CD8-positive, alpha-beta T cell (primary cell): ENCODE measurements at regions of chr12 and their contacts with region 1.

Region 1: GRCh38 chr12:9813821-9814809 is 13.2 kb upstream of the KLRF1 start:
- DNase-seq: peak; percentile 85 to 98 (median 92)
- ATAC-seq: peak; percentile 98
- H3K4me3 ChIP-seq: peak overlapping the region; percentile 65 to 66
- H3K4me3 Mint-ChIP-seq: peak overlapping the region; percentile 87
- H3K27ac ChIP-seq: peak overlapping the region; percentile 38 to 59
- H3K27ac Mint-ChIP-seq: peak overlapping the region; percentile 88
- H3K4me1 ChIP-seq: peaks cover 7% of the 10 kb centered on the region
- H3K4me1 Mint-ChIP-seq: peaks cover 13% of the 10 kb centered on the region
- H3K27me3 ChIP-seq: no peaks in the 10 kb centered on the region
- H3K27me3 Mint-ChIP-seq: peaks cover 4% of the 10 kb centered on the region
- CTCF ChIP-seq: peak; percentile 82

Region 2: GRCh38 chr12:9741726-9742125 is 72.4 kb before region 1 on chr12:
- CTCF ChIA-PET with region 1: interaction called, 138 read pairs
- POLR2A ChIA-PET with region 1: no interaction called
- intact Hi-C with region 1: no loop called
- DNase-seq: peak; percentile 44 to 95 (median 67)
- ATAC-seq: peak; percentile 59
- H3K4me3 ChIP-seq: peak overlapping the region; percentile 13 to 19
- H3K4me3 Mint-ChIP-seq: peak overlapping the region; percentile 77
- H3K27ac ChIP-seq: peak overlapping the region; percentile 63 to 68
- H3K27ac Mint-ChIP-seq: peak overlapping the region; percentile 97
- H3K4me1 ChIP-seq: peaks cover 60% of the 10 kb centered on the region
- H3K4me1 Mint-ChIP-seq: peaks cover 67% of the 10 kb centered on the region
- H3K27me3 ChIP-seq: no peaks in the 10 kb centered on the region
- H3K27me3 Mint-ChIP-seq: no peaks in the 10 kb centered on the region
- CTCF ChIP-seq: no peak

Region 3: GRCh38 chr12:9827209-9827888 is 13.2 kb after region 1 on chr12 and contains the start of gene KLRF1:
- CTCF ChIA-PET with region 1: interaction called, 19 read pairs
- POLR2A ChIA-PET with region 1: interaction called, 4 read pairs
- intact Hi-C with region 1: no loop called
- DNase-seq: peak in 2 of 9 experiments; percentile 26 to 53
- ATAC-seq: no peak
- H3K4me3 ChIP-seq: peak within 1 kb of the TSS in 1 of 2 experiments; percentile 47
- H3K4me3 Mint-ChIP-seq: peak within 1 kb of the TSS; percentile 50
- H3K27ac ChIP-seq: peak within 1 kb of the TSS in 1 of 2 experiments; percentile 60
- H3K27ac Mint-ChIP-seq: peak within 1 kb of the TSS; percentile 11
- H3K4me1 ChIP-seq: no peaks in the 10 kb centered on the region
- H3K4me1 Mint-ChIP-seq: peaks cover 11% of the 10 kb centered on the region
- H3K27me3 ChIP-seq: no peaks in the 10 kb centered on the region
- H3K27me3 Mint-ChIP-seq: no peaks in the 10 kb centered on the region
- CTCF ChIP-seq: no peak
- total RNA-seq, gene KLRF1: 0.78 to 0.92 TPM

Region 4: DNA sequence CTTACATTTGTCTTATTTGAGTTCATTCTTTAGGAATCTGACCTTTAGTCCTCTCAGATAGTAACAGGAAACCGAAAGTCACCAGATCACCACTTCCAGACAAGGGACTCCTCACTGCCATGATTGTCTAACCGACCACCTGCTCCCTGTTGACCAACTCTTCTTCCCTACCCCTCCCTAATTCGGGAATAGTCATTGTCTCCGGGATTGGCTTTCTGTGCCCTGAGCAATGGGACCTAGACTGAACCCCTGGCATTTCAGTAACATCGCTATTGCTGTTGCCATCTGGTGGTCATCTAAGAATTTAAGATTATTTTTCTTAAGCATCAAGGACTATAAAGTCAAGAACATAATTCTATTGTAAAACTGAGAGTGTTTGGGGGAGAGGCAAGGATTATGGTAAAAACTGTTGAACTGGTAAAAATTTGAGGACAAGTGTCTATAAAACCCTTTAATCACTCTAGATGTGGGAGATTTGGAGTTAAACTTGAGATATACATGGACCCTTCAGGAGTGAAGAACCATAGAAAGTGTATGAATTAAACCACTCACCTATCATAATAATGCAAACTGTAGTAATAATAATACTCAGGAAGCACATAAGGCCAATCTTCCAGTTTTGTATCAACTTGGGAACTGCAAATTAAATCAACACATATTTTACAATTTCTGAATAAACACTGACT is 111.7 kb after region 1 on chr12:
- CTCF ChIA-PET with region 1: interaction called, 107 read pairs
- POLR2A ChIA-PET with region 1: interaction called, 14 read pairs
- intact Hi-C with region 1: loop called (anchors 1 kb)
- DNase-seq: peak in 6 of 9 experiments; percentile 5 to 74 (median 44)
- ATAC-seq: peak; percentile 59
- H3K4me3 ChIP-seq: peak overlapping the region; percentile 21 to 28
- H3K4me3 Mint-ChIP-seq: peak overlapping the region; percentile 77
- H3K27ac ChIP-seq: no peak overlapping the region
- H3K27ac Mint-ChIP-seq: peak overlapping the region; percentile 18
- H3K4me1 ChIP-seq: no peaks in the 10 kb centered on the region
- H3K4me1 Mint-ChIP-seq: peaks cover 12% of the 10 kb centered on the region
- H3K27me3 ChIP-seq: peaks cover 0 to 2% of the 10 kb centered on the region in 2 experiments
- H3K27me3 Mint-ChIP-seq: no peaks in the 10 kb centered on the region
- CTCF ChIP-seq: peak; percentile 62

Region 5: GRCh38 chr12:10001171-10001776 is 187.2 kb after region 1 on chr12:
- CTCF ChIA-PET with region 1: no interaction called
- POLR2A ChIA-PET with region 1: no interaction called
- intact Hi-C with region 1: loop called in 1 of 2 experiments (anchors 5 kb)
- DNase-seq: no peak
- ATAC-seq: no peak
- H3K4me3 ChIP-seq: no peak overlapping the region
- H3K4me3 Mint-ChIP-seq: no peak overlapping the region
- H3K27ac ChIP-seq: no peak overlapping the region
- H3K27ac Mint-ChIP-seq: no peak overlapping the region
- H3K4me1 ChIP-seq: no peaks in the 10 kb centered on the region
- H3K4me1 Mint-ChIP-seq: no peaks in the 10 kb centered on the region
- H3K27me3 ChIP-seq: no peaks in the 10 kb centered on the region
- H3K27me3 Mint-ChIP-seq: peaks cover 2% of the 10 kb centered on the region
- CTCF ChIP-seq: no peak

Region 6: DNA sequence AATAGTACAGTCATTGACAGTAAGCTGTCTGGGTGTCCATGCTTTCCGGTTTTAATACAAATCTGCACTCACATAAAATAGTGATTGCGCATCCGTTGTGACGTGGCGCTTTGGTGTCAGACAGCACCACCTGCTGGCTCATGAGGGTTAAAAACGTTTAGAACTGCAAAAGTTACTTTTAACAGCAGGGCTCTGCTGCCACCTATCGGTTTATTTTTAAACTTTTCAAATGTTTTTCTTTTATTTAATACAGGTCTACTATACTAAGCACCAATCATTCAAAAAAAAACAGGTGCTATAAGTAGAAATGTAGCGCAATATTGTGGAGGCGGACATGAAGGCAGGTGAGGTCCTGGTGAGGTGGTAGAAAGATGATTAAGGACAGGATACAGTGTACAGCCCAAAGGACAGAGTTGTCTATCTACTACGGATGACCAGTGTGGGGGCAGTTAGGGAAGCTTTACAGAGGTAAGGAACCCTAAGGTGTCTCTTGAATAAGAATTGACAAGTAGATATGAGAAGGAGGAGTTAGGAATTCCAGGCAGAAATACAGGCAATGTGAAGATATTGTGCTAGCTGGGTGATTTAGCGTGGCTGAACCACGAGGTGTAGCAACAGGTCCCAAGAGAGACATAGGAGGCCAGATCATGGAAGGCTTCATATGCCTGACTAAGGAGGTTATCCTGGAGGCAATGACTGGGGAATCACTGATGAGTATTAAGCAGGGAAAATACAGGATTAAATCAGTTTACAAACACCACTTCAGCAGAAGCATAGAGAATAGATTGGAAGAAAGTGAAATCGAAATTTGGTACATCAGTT is 1672.7 kb after region 1 on chr12:
- CTCF ChIA-PET with region 1: no interaction called
- POLR2A ChIA-PET with region 1: no interaction called
- intact Hi-C with region 1: loop called in 1 of 2 experiments (anchors 10 kb)
- DNase-seq: peak; percentile 55 to 92 (median 79)
- ATAC-seq: peak; percentile 99
- H3K4me3 ChIP-seq: no peak overlapping the region
- H3K4me3 Mint-ChIP-seq: no peak overlapping the region
- H3K27ac ChIP-seq: no peak overlapping the region
- H3K27ac Mint-ChIP-seq: no peak overlapping the region
- H3K4me1 ChIP-seq: no peaks in the 10 kb centered on the region
- H3K4me1 Mint-ChIP-seq: peaks cover 8% of the 10 kb centered on the region
- H3K27me3 ChIP-seq: no peaks in the 10 kb centered on the region
- H3K27me3 Mint-ChIP-seq: no peaks in the 10 kb centered on the region
- CTCF ChIP-seq: peak; percentile 100